Esophagus muscularis mucosa (tissue), 4 donors: ENCODE measurements at regions of chr17 and their contacts with region 1.

Region 1: GRCh38 chr17:11031787-11032186 is 193.9 kb upstream of the PIRT start:
- DNase-seq: no peak
- H3K4me3 ChIP-seq: no peak overlapping the region
- H3K27ac ChIP-seq: no peak overlapping the region
- H3K4me1 ChIP-seq: no peaks in the 10 kb centered on the region
- H3K27me3 ChIP-seq: no peaks in the 10 kb centered on the region
- CTCF ChIP-seq: no peak
- EP300 ChIP-seq: no peak
- POLR2A ChIP-seq: no peak

Region 2: GRCh38 chr17:10888858-10889257 is 142.9 kb before region 1 on chr17:
- intact Hi-C with region 1: no loop called
- DNase-seq: no peak
- H3K4me3 ChIP-seq: no peak overlapping the region
- H3K27ac ChIP-seq: no peak overlapping the region
- H3K4me1 ChIP-seq: no peaks in the 10 kb centered on the region
- H3K27me3 ChIP-seq: no peaks in the 10 kb centered on the region
- CTCF ChIP-seq: no peak
- EP300 ChIP-seq: no peak
- POLR2A ChIP-seq: no peak

Region 3: GRCh38 chr17:11122908-11123307 is 91.1 kb after region 1 on chr17:
- intact Hi-C with region 1: loop called (anchors 5 kb)
- DNase-seq: no peak
- H3K4me3 ChIP-seq: no peak overlapping the region
- H3K27ac ChIP-seq: no peak overlapping the region
- H3K4me1 ChIP-seq: peaks cover 0 to 2% (median 0%) of the 10 kb centered on the region in 4 donors
- H3K27me3 ChIP-seq: no peaks in the 10 kb centered on the region
- CTCF ChIP-seq: no peak
- EP300 ChIP-seq: no peak
- POLR2A ChIP-seq: no peak